H1 (cell line): ENCODE measurements at regions of chr12 and their contacts with region 1.

Region 1: GRCh38 chr12:31362759-31363415 is 36.9 kb upstream of the SINHCAF start:
- DNase-seq: peak in 1 of 2 experiments; percentile 58
- H3K4me3 ChIP-seq: peak overlapping the region in 1 of 4 experiments; percentile 33; a peak in 2 of 8 replicates
- H3K27ac ChIP-seq: peak overlapping the region; percentile 85
- H3K4me1 ChIP-seq: peaks cover 13 to 21% (median 21%) of the 10 kb centered on the region in 4 experiments
- H3K27me3 ChIP-seq: no peaks in the 10 kb centered on the region
- CTCF ChIP-seq: no peak
- EP300 ChIP-seq: no peak
- POLR2A ChIP-seq: no peak
- RAD21 ChIP-seq: peak in 1 of 2 experiments; percentile 25; a peak in 1 of 4 replicates

Region 2: DNA sequence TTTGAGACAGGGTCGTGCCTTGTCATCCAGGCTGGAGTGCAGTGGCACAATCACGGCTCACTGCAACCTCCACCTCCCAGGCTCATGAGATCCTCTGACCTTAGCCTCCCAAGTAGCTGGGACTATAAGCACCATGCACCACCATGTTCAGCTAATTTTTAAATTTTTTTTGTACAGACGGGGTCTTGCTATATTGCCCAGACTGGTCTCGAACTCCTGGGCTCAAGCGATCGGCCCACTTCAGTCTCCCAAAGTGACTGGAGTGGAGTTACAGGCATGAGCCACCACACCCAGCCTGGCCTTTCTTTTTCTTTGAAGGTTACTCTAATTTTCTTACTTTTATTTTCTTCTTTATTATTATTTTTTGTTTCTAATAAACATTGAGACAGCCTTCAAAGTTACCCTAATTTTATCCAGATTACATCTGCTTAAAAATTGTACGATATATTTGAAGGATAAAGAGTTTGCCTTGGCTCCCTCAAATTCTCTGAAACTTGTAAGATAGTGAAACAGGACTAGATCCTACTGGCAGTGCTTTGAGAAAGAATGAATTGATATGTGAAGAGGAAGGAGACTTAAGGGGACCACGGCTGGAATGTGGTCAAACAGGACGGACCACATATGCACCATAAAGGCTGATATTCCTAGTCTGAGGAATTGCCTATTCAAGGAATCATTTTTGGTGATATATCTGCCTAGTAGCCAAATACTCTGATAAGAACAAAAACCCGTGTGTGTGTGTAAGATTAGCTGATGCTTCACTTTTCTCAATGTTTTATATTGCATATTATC is 22.9 kb before region 1 on chr12:
- CTCF ChIA-PET with region 1: interaction called, 6 read pairs
- POLR2A ChIA-PET with region 1: interaction called, 68 read pairs
- DNase-seq: no peak
- H3K4me3 ChIP-seq: no peak overlapping the region; a peak in 1 of 8 replicates
- H3K27ac ChIP-seq: no peak overlapping the region
- H3K4me1 ChIP-seq: peaks cover 0 to 10% (median 5%) of the 10 kb centered on the region in 4 experiments; a peak in 4 of 7 replicates
- H3K27me3 ChIP-seq: no peaks in the 10 kb centered on the region
- CTCF ChIP-seq: no peak
- EP300 ChIP-seq: peak in 1 of 2 experiments; percentile 76; a peak in 1 of 3 replicates
- POLR2A ChIP-seq: no peak
- RAD21 ChIP-seq: no peak

Region 3: GRCh38 chr12:31346267-31346666 is 16.6 kb before region 1 on chr12:
- CTCF ChIA-PET with region 1: interaction called, 7 read pairs
- POLR2A ChIA-PET with region 1: interaction called, 68 read pairs
- DNase-seq: no peak
- H3K4me3 ChIP-seq: no peak overlapping the region
- H3K27ac ChIP-seq: no peak overlapping the region
- H3K4me1 ChIP-seq: peaks cover 0 to 9% (median 2%) of the 10 kb centered on the region in 4 experiments; a peak in 4 of 7 replicates
- H3K27me3 ChIP-seq: no peaks in the 10 kb centered on the region
- CTCF ChIP-seq: no peak
- EP300 ChIP-seq: no peak
- POLR2A ChIP-seq: no peak
- RAD21 ChIP-seq: no peak